Naive thymus-derived CD8-positive, alpha-beta T cell (primary cell): ENCODE measurements at regions of chr1 and their contacts with region 1.

Region 1: GRCh38 chr1:50978144-50978851 is 8.3 kb downstream of the CDKN2C start:
- DNase-seq: peak in 6 of 10 donors; percentile 13 to 48 (median 24)
- ATAC-seq: peak; percentile 36 to 52
- H3K4me3 Mint-ChIP-seq: peak overlapping the region; percentile 77 to 92 (median 86)
- H3K27ac Mint-ChIP-seq: peak overlapping the region; percentile 4 to 90 (median 58)
- H3K4me1 Mint-ChIP-seq: peaks cover 10 to 23% (median 18%) of the 10 kb centered on the region in 4 donors
- H3K27me3 Mint-ChIP-seq: peaks cover 14 to 27% (median 26%) of the 10 kb centered on the region in 5 donors

Region 2: GRCh38 chr1:50959913-50960844 is 18.1 kb before region 1 on chr1 and contains the start of gene FAF1:
- POLR2A ChIA-PET with region 1: interaction called, 11 read pairs
- DNase-seq: peak; percentile 94 to 99 (median 98)
- ATAC-seq: peak; percentile 88 to 90
- H3K4me3 Mint-ChIP-seq: peak within 1 kb of the TSS; percentile 72 to 96 (median 92)
- H3K27ac Mint-ChIP-seq: peak within 1 kb of the TSS; percentile 93 to 98 (median 96)
- H3K4me1 Mint-ChIP-seq: peaks cover 10 to 31% (median 25%) of the 10 kb centered on the region in 4 donors
- H3K27me3 Mint-ChIP-seq: peaks cover 0 to 2% (median 0%) of the 10 kb centered on the region in 5 donors
- polyA plus RNA-seq, gene FAF1: 46.8 to 64.5 (median 59.5) TPM

Region 3: GRCh38 chr1:50968158-50968820 is 10.0 kb before region 1 on chr1:
- POLR2A ChIA-PET with region 1: interaction called, 30 read pairs
- DNase-seq: peak; percentile 71 to 87 (median 83)
- ATAC-seq: peak; percentile 78 to 84
- H3K4me3 Mint-ChIP-seq: peak overlapping the region; percentile 90 to 99 (median 98)
- H3K27ac Mint-ChIP-seq: peak overlapping the region; percentile 66 to 95 (median 91)
- H3K4me1 Mint-ChIP-seq: peaks cover 9 to 28% (median 20%) of the 10 kb centered on the region in 4 donors
- H3K27me3 Mint-ChIP-seq: peaks cover 0 to 2% (median 0%) of the 10 kb centered on the region in 5 donors